CD8-positive, alpha-beta T cell (primary cell): ENCODE measurements at regions of chr1 and their contacts with region 1.

Region 1: DNA sequence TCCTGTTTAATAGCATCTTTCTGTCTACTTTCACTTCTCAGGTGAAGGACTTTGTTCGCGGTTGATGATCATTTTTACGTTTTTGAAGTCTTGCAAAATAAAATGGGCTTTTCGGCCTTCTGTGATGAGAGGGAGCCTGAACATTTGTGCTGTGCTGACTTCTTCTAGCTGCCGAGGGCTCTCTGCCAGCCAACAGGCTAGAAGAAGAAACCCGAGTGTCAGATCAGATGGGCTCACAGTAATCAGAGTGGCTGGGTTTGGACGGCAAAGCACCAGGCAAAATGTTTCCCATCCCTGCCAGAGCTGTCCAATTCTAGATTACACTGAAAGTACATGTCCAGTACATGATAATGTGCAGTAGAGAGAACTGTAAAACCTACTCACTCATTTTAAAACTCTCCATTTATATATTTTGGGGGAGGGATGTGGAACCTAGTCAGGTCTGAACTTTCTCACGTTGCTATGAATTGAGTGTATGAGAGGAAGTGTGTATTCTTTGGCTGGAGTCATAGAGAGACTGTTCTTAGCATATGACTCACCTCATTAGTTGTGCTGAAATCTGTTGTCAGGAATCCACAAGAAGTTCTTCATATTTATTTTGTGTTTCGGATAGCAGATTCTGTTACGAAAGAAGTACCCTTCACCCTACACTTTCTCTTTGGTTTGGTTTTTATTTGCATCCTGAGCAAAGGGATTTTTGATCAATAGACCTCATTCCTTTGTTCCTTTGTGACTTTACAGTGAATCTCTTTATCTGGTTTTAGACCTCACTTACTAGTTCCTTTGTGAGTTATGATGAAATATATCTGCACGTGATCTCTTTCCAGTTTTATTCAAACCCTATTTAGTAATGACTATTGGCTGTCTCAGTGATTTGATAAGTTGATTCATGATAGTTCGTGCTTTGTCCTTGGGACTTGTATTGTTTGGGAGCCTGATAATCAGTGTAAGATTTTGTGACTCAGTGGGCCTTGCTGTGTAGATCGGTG is 4.8 kb downstream of the ATP1A1 start:
- DNase-seq: peak in 6 of 9 experiments; percentile 6 to 81 (median 52)
- ATAC-seq: peak; percentile 58
- H3K4me3 ChIP-seq: peak overlapping the region; percentile 24 to 39
- H3K4me3 Mint-ChIP-seq: peak overlapping the region; percentile 85
- H3K27ac ChIP-seq: peak overlapping the region; percentile 83 to 92
- H3K27ac Mint-ChIP-seq: peak overlapping the region; percentile 95
- H3K4me1 ChIP-seq: peaks cover 69% of the 10 kb centered on the region
- H3K4me1 Mint-ChIP-seq: peaks cover 85% of the 10 kb centered on the region
- H3K27me3 ChIP-seq: no peaks in the 10 kb centered on the region
- H3K27me3 Mint-ChIP-seq: no peaks in the 10 kb centered on the region
- CTCF ChIP-seq: no peak

Region 2: DNA sequence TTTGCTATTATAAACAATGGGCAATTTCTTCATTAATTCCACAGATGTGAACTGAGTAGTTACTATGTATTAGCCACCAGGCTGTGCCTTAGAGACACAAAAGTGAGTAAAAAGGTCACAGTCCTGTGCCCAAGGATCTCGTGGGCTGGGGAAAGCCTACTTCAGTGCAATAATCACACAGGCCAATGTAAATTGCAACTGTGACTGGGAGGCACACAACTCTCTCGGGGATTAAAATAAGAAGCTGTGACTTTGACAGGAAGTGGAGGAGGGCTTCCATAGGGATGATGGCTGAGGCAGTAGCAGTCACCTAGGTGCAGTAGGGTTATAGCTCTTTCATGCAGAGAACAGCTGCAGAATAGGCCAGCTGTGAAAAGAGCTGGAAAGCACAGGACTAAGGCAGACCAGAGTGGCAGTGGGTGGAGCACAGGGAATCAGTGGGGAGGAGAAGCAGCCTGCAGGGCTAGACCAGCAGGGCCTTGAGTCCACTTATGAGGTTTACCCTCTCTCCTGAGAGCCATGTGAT is 144.8 kb before region 1 on chr1:
- CTCF ChIA-PET with region 1: interaction called, 9 read pairs
- POLR2A ChIA-PET with region 1: no interaction called
- intact Hi-C with region 1: loop called in 1 of 2 experiments (anchors 5 kb)
- DNase-seq: peak in 4 of 9 experiments; percentile 30 to 64 (median 51)
- ATAC-seq: peak; percentile 73
- H3K4me3 ChIP-seq: no peak overlapping the region
- H3K4me3 Mint-ChIP-seq: no peak overlapping the region
- H3K27ac ChIP-seq: no peak overlapping the region
- H3K27ac Mint-ChIP-seq: no peak overlapping the region
- H3K4me1 ChIP-seq: peaks cover 6% of the 10 kb centered on the region
- H3K4me1 Mint-ChIP-seq: peaks cover 11% of the 10 kb centered on the region
- H3K27me3 ChIP-seq: no peaks in the 10 kb centered on the region
- H3K27me3 Mint-ChIP-seq: no peaks in the 10 kb centered on the region
- CTCF ChIP-seq: peak; percentile 45

Region 3: GRCh38 chr1:116339240-116339639 is 38.6 kb before region 1 on chr1:
- CTCF ChIA-PET with region 1: no interaction called
- POLR2A ChIA-PET with region 1: no interaction called
- intact Hi-C with region 1: no loop called
- DNase-seq: peak in 1 of 9 experiments; percentile 25
- ATAC-seq: no peak
- H3K4me3 ChIP-seq: no peak overlapping the region
- H3K4me3 Mint-ChIP-seq: no peak overlapping the region
- H3K27ac ChIP-seq: no peak overlapping the region
- H3K27ac Mint-ChIP-seq: no peak overlapping the region
- H3K4me1 ChIP-seq: peaks cover 7% of the 10 kb centered on the region
- H3K4me1 Mint-ChIP-seq: peaks cover 26% of the 10 kb centered on the region
- H3K27me3 ChIP-seq: no peaks in the 10 kb centered on the region
- H3K27me3 Mint-ChIP-seq: no peaks in the 10 kb centered on the region
- CTCF ChIP-seq: no peak

Region 4: DNA sequence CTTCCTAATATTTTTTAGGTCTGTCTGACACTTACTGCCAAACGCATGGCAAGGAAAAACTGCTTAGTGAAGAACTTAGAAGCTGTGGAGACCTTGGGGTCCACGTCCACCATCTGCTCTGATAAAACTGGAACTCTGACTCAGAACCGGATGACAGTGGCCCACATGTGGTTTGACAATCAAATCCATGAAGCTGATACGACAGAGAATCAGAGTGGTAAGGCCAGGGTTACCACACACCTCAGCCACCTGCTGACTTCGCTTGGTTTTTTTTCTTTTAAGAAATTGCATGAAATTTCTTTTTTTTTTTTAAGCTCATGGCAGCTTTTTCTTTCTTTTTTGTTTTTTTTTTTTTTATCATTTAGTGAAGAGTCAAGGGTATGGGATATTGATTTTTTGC is 12.4 kb after region 1 on chr1:
- CTCF ChIA-PET with region 1: interaction called, 4 read pairs
- POLR2A ChIA-PET with region 1: interaction called, 11 read pairs
- intact Hi-C with region 1: loop called in 1 of 2 experiments (anchors 1 kb)
- DNase-seq: peak in 6 of 9 experiments; percentile 14 to 83 (median 49)
- ATAC-seq: peak; percentile 87
- H3K4me3 ChIP-seq: no peak overlapping the region
- H3K4me3 Mint-ChIP-seq: no peak overlapping the region
- H3K27ac ChIP-seq: peak overlapping the region in 1 of 2 experiments; percentile 34
- H3K27ac Mint-ChIP-seq: peak overlapping the region; percentile 72
- H3K4me1 ChIP-seq: peaks cover 13% of the 10 kb centered on the region
- H3K4me1 Mint-ChIP-seq: peaks cover 61% of the 10 kb centered on the region
- H3K27me3 ChIP-seq: no peaks in the 10 kb centered on the region
- H3K27me3 Mint-ChIP-seq: no peaks in the 10 kb centered on the region
- CTCF ChIP-seq: no peak

Region 5: DNA sequence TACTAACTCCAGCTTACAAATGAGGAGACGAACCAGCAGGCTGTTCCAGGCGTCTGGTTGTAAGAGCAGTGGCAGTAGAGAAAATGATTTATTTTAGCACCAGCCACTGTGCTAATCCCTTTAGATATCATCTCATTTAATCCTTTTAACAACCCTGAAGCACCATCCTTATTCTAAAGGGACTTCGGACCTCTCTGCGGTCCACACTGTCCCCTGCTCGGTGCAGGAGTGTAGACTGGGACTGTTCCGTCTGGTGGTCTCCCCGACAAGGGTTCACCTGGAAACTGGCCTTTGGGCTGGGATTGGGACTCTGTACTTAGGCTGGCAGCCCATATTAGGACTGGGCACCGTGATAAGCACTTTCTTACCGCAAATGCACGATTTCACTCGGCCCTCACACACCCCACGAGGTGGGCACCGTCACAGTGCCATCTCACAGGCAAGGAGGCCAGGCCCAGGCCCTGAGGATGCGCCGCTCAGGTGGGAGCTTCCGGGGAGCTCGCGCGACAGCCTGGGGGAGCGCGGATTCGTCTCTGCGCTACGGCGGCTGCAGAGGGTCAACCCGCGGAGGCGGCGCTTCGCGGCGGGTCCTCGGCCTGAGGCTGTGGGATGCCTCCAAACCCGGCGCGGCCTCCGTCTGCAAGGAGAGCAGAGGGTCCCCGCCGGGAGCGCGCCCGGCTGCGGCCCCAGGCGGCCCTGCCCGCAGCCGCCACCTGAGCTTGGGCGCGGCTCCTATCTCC is 40.4 kb after region 1 on chr1:
- CTCF ChIA-PET with region 1: no interaction called
- POLR2A ChIA-PET with region 1: interaction called, 40 read pairs
- intact Hi-C with region 1: loop called (anchors 1 to 2 kb)
- DNase-seq: peak; percentile 79 to 93 (median 87)
- ATAC-seq: peak; percentile 98
- H3K4me3 ChIP-seq: peak overlapping the region; percentile 81 to 83
- H3K4me3 Mint-ChIP-seq: peak overlapping the region; percentile 89
- H3K27ac ChIP-seq: peak overlapping the region; percentile 78 to 80
- H3K27ac Mint-ChIP-seq: peak overlapping the region; percentile 96
- H3K4me1 ChIP-seq: peaks cover 29% of the 10 kb centered on the region
- H3K4me1 Mint-ChIP-seq: peaks cover 35% of the 10 kb centered on the region
- H3K27me3 ChIP-seq: no peaks in the 10 kb centered on the region
- H3K27me3 Mint-ChIP-seq: no peaks in the 10 kb centered on the region
- CTCF ChIP-seq: no peak

Region 6: DNA sequence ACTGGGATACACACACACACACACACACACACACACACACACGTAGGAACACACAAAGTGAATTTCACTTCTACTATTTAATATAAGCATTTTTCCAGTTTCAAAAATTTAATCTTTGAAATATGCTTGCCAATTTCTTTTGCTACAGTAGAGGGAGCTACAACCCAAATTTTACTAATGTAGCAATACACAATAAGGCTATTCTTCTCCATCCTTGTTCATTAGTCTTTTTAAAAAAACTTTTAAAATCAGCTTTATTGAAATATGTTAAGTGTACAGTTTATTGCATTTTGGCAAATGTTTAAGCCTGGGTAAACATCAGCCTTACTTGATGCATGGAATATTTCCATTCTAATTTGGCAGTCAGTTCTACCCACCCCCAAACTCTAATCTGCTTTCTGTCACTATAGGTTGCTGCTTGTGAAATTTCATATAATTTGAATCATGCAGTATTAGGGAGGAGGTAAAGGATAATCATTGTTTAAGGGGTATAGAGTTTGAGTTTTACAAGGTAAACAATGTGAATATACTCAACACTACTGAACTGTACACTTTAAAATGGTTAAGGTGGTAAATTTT is 1135.0 kb after region 1 on chr1:
- CTCF ChIA-PET with region 1: no interaction called
- POLR2A ChIA-PET with region 1: no interaction called
- intact Hi-C with region 1: no loop called
- DNase-seq: peak in 2 of 9 experiments; percentile 35 to 46
- ATAC-seq: peak; percentile 46
- H3K4me3 ChIP-seq: no peak overlapping the region
- H3K4me3 Mint-ChIP-seq: no peak overlapping the region
- H3K27ac ChIP-seq: no peak overlapping the region
- H3K27ac Mint-ChIP-seq: no peak overlapping the region
- H3K4me1 ChIP-seq: no peaks in the 10 kb centered on the region
- H3K4me1 Mint-ChIP-seq: no peaks in the 10 kb centered on the region
- H3K27me3 ChIP-seq: no peaks in the 10 kb centered on the region
- H3K27me3 Mint-ChIP-seq: no peaks in the 10 kb centered on the region
- CTCF ChIP-seq: peak; percentile 80

Region 7: DNA sequence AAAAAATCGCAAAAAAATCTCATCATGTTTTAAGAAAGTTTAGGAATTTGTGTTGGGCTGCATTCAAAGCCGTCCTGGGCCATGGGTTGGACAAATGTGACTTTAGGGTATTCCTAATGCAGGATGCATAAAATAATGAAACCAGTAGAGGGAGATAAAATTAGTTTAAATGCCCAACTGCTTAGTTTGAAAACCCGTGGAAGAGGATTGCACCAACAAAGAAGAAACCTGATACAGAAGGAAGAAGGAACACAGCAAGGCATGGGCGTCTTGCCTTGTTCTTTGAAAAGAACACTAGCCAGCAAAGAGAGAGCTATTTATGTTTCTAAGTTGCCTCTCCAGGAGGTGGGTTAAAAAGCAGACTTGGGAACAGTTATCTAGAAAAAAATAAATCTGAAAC is 1589.6 kb after region 1 on chr1:
- CTCF ChIA-PET with region 1: no interaction called
- POLR2A ChIA-PET with region 1: no interaction called
- intact Hi-C with region 1: no loop called
- DNase-seq: no peak
- ATAC-seq: no peak
- H3K4me3 ChIP-seq: no peak overlapping the region
- H3K4me3 Mint-ChIP-seq: no peak overlapping the region
- H3K27ac ChIP-seq: no peak overlapping the region
- H3K27ac Mint-ChIP-seq: no peak overlapping the region
- H3K4me1 ChIP-seq: no peaks in the 10 kb centered on the region
- H3K4me1 Mint-ChIP-seq: no peaks in the 10 kb centered on the region
- H3K27me3 ChIP-seq: no peaks in the 10 kb centered on the region
- H3K27me3 Mint-ChIP-seq: no peaks in the 10 kb centered on the region
- CTCF ChIP-seq: no peak